Left cardiac atrium (tissue), 4 donors: ENCODE measurements at regions of chr3 and their contacts with region 1.

Region 1: DNA sequence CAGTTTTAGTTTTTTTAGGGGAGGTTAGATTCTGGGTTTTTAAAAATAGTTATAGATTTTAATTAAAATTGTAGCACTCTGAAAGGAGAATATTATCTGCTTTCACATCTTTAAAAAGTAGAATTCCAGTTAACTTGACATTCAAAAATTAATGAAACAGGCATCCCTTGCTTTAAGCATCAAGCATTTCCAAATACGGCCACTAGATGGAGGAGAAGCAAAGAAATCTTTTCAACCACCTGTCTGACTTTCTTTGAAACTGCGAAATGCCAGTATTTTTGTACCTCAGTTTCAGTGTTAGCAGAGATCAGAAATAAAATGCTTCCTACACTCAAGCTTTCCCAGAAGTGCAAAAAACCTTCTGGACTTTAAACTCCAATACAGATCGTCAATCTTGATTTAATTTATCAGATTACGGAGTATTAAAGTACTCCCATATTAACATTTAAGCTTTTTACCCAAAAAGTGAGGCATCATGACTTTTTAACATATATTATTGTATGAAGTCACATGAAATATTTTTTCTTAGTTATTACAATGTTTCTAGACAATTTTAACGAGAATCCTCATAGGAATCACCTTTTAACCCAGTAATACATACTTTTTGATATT is 153.3 kb downstream of the P3H2 start:
- DNase-seq: no peak
- ATAC-seq: no peak

Region 2: DNA sequence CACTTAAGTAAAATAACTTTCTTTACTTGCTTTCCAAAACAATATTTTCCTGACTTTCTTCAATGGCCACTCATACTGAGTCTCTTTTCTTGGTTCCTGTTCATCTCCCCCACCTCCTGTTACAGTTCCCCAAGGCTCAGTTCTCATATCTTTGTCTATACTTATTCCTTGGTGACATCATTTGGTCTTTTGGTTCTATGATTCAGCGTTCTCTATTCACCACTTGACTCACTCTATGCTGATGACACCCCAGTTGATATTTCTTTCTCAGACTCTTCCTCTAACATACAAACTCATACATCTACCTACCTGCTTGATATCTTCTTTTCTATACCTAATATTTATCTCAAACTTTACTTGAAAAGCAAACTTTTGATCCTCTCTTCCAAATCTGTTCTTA is 238.4 kb after region 1 on chr3:
- intact Hi-C with region 1: loop called (anchors 2 to 5 kb)
- DNase-seq: no peak
- ATAC-seq: peak in 1 of 2 donors; percentile 29